HCT116 (cell line): ENCODE measurements at regions of chr15 and their contacts with region 1.

Region 1: GRCh38 chr15:44501768-44502366 is 35.1 kb upstream of the EIF3J start:
- DNase-seq: peak; percentile 4
- ATAC-seq: peak; percentile 80
- H3K4me3 ChIP-seq: no peak overlapping the region
- H3K27ac ChIP-seq: no peak overlapping the region
- H3K4me1 ChIP-seq: no peaks in the 10 kb centered on the region
- H3K27me3 ChIP-seq: no peaks in the 10 kb centered on the region
- CTCF ChIP-seq: peak; percentile 48 to 71 (median 56); a peak in 5 of 6 replicates
- POLR2A ChIP-seq: no peak
- RAD21 ChIP-seq: peak; percentile 62

Region 2: GRCh38 chr15:43872416-43873020 is 629.3 kb before region 1 on chr15:
- CTCF ChIA-PET with region 1: no interaction called
- POLR2A ChIA-PET with region 1: no interaction called
- RAD21 ChIA-PET with region 1: no interaction called
- intact Hi-C with region 1: loop called (anchors 10 kb)
- DNase-seq: peak; percentile 45
- ATAC-seq: peak; percentile 93
- H3K4me3 ChIP-seq: no peak overlapping the region
- H3K27ac ChIP-seq: no peak overlapping the region
- H3K4me1 ChIP-seq: no peaks in the 10 kb centered on the region
- H3K27me3 ChIP-seq: no peaks in the 10 kb centered on the region
- CTCF ChIP-seq: peak; percentile 33 to 70 (median 70); a peak in 5 of 6 replicates
- POLR2A ChIP-seq: no peak
- RAD21 ChIP-seq: peak; percentile 67

Region 3: DNA sequence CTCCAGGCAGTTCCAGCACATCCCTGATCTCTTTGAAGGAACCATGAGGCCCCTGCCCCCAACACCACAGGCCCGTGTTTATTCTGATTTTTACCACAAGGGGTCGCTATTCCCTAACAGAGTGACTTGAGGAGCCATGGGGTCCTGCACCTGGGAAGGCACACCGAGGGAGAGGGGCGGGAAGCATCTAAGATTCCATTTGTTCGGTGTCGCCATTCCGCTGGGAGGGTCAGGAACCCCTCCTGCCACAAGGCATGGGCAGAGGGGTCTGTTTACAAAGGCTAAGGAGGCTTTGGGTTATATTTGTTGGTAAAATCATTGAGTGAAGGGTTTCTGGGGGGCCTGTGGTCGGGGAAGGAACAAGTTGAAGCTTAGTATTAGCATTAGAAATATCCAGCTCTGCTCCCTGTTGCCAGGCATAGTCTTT is 598.0 kb before region 1 on chr15:
- CTCF ChIA-PET with region 1: no interaction called
- POLR2A ChIA-PET with region 1: no interaction called
- RAD21 ChIA-PET with region 1: no interaction called
- intact Hi-C with region 1: loop called (anchors 5 kb)
- DNase-seq: peak; percentile 56
- ATAC-seq: peak; percentile 93
- H3K4me3 ChIP-seq: no peak overlapping the region
- H3K27ac ChIP-seq: no peak overlapping the region
- H3K4me1 ChIP-seq: no peaks in the 10 kb centered on the region; a peak in 2 of 4 replicates
- H3K27me3 ChIP-seq: no peaks in the 10 kb centered on the region
- CTCF ChIP-seq: peak; percentile 76 to 94 (median 82)
- POLR2A ChIP-seq: no peak
- RAD21 ChIP-seq: peak; percentile 95

Region 4: DNA sequence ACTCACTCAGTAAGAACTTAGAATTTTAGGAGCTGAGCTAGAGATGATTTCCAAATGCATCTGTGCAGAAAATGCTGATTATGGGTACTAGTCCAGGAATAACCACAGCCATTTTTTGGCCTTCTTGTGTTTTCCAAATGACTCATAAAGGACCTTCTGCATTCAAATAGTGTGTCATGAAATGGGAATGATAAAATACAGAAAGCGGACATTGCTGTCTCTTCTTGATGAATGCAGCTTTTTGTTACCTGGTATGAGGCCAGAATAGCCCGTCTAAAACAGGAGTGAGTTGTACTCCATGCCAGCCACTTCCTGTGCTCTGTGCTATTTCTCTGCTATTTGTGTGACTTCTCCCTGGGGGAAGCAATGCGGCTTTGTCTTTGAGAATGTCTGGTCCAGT is 286.3 kb before region 1 on chr15:
- CTCF ChIA-PET with region 1: interaction called, 5 read pairs
- POLR2A ChIA-PET with region 1: no interaction called
- RAD21 ChIA-PET with region 1: no interaction called
- intact Hi-C with region 1: loop called (anchors 5 kb)
- DNase-seq: peak; percentile 85
- ATAC-seq: peak; percentile 75
- H3K4me3 ChIP-seq: peak overlapping the region in 1 of 2 experiments; percentile 27; a peak in 1 of 4 replicates
- H3K27ac ChIP-seq: peak overlapping the region; percentile 73; the same call in 1 of the 2 replicates
- H3K4me1 ChIP-seq: peaks cover 18 to 56% of the 10 kb centered on the region in 2 experiments
- H3K27me3 ChIP-seq: no peaks in the 10 kb centered on the region
- CTCF ChIP-seq: no peak
- POLR2A ChIP-seq: no peak
- RAD21 ChIP-seq: peak; percentile 8; the same call in 1 of the 2 replicates

Region 5: GRCh38 chr15:44426975-44427755 is 74.7 kb before region 1 on chr15 and contains the start of gene CTDSPL2:
- CTCF ChIA-PET with region 1: interaction called, 18 read pairs
- POLR2A ChIA-PET with region 1: no interaction called
- RAD21 ChIA-PET with region 1: no interaction called
- intact Hi-C with region 1: no loop called
- DNase-seq: peak; percentile 97
- ATAC-seq: peak; percentile 97
- H3K4me3 ChIP-seq: peak within 1 kb of the TSS; percentile 96 to 99
- H3K27ac ChIP-seq: peak within 1 kb of the TSS; percentile 89
- H3K4me1 ChIP-seq: peaks cover 7 to 21% of the 10 kb centered on the region in 2 experiments
- H3K27me3 ChIP-seq: no peaks in the 10 kb centered on the region
- CTCF ChIP-seq: peak in 2 of 3 experiments; percentile 19 to 28; a peak in 2 of 6 replicates
- POLR2A ChIP-seq: peak; percentile 50
- RAD21 ChIP-seq: no peak
- total RNA-seq, gene CTDSPL2: 56.0 TPM

Region 6: GRCh38 chr15:44489464-44489863 is 12.4 kb before region 1 on chr15:
- CTCF ChIA-PET with region 1: interaction called, 28 read pairs
- POLR2A ChIA-PET with region 1: no interaction called
- RAD21 ChIA-PET with region 1: no interaction called
- intact Hi-C with region 1: no loop called
- DNase-seq: peak; percentile 33
- ATAC-seq: peak; percentile 88
- H3K4me3 ChIP-seq: no peak overlapping the region
- H3K27ac ChIP-seq: peak overlapping the region; percentile 13; the same call in 1 of the 2 replicates
- H3K4me1 ChIP-seq: peaks cover 20 to 36% of the 10 kb centered on the region in 2 experiments
- H3K27me3 ChIP-seq: no peaks in the 10 kb centered on the region
- CTCF ChIP-seq: no peak
- POLR2A ChIP-seq: no peak
- RAD21 ChIP-seq: no peak

Region 7: DNA sequence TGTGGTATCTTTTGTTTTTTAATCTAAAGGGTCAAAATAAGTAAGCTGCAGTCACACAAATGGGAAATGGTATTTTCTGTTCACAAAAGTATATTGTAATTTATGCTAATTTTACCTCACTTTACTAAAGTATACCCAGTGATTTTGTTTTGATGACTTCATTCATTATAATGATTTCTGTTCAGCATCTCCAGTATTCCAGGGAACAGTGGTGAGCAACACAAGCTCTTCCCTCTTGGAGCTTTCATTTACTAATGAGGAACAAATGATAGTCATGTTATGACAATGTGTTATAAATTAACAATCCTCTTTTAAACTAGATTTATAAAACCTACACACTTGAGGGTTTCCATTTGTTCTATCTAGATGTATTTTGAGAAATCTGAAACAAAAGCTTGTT is 14.6 kb after region 1 on chr15:
- CTCF ChIA-PET with region 1: interaction called, 12 read pairs
- POLR2A ChIA-PET with region 1: no interaction called
- RAD21 ChIA-PET with region 1: no interaction called
- intact Hi-C with region 1: no loop called
- DNase-seq: no peak
- ATAC-seq: no peak
- H3K4me3 ChIP-seq: no peak overlapping the region
- H3K27ac ChIP-seq: no peak overlapping the region
- H3K4me1 ChIP-seq: no peaks in the 10 kb centered on the region
- H3K27me3 ChIP-seq: no peaks in the 10 kb centered on the region
- CTCF ChIP-seq: no peak
- POLR2A ChIP-seq: no peak
- RAD21 ChIP-seq: no peak

Region 8: GRCh38 chr15:44633603-44634002 is 131.7 kb after region 1 on chr15:
- CTCF ChIA-PET with region 1: no interaction called
- POLR2A ChIA-PET with region 1: no interaction called
- RAD21 ChIA-PET with region 1: no interaction called
- intact Hi-C with region 1: no loop called
- DNase-seq: no peak
- ATAC-seq: no peak
- H3K4me3 ChIP-seq: no peak overlapping the region
- H3K27ac ChIP-seq: no peak overlapping the region
- H3K4me1 ChIP-seq: no peaks in the 10 kb centered on the region
- H3K27me3 ChIP-seq: no peaks in the 10 kb centered on the region
- CTCF ChIP-seq: no peak
- POLR2A ChIP-seq: no peak
- RAD21 ChIP-seq: no peak

Region 9: GRCh38 chr15:45279024-45279698 is 777.3 kb after region 1 on chr15:
- CTCF ChIA-PET with region 1: no interaction called
- POLR2A ChIA-PET with region 1: no interaction called
- RAD21 ChIA-PET with region 1: no interaction called
- intact Hi-C with region 1: no loop called
- DNase-seq: peak; percentile 96
- ATAC-seq: peak; percentile 100
- H3K4me3 ChIP-seq: peak overlapping the region; percentile 64 to 81
- H3K27ac ChIP-seq: peak overlapping the region; percentile 27
- H3K4me1 ChIP-seq: peaks cover 3 to 13% of the 10 kb centered on the region in 2 experiments; a peak in 3 of 4 replicates
- H3K27me3 ChIP-seq: 0 out of 2 replicates have a peak, but pooled peaks cover under 1% of the 10 kb centered on the region
- CTCF ChIP-seq: no peak
- POLR2A ChIP-seq: peak; percentile 91
- RAD21 ChIP-seq: no peak